ENCODE measurements at regions of chr1 and their contacts with region 1.

Region 1: GRCh38 chr1:222754366-222755139 is 17.6 kb downstream of the FAM177B start:
- DNase-seq: peak; percentile 98
- H3K4me3 Mint-ChIP-seq: peak overlapping the region; percentile 46
- H3K27ac Mint-ChIP-seq: peak overlapping the region; percentile 86
- H3K4me1 Mint-ChIP-seq: peaks cover 28% of the 10 kb centered on the region
- H3K27me3 Mint-ChIP-seq: no peaks in the 10 kb centered on the region
- CTCF ChIP-seq: no peak

Region 2: DNA sequence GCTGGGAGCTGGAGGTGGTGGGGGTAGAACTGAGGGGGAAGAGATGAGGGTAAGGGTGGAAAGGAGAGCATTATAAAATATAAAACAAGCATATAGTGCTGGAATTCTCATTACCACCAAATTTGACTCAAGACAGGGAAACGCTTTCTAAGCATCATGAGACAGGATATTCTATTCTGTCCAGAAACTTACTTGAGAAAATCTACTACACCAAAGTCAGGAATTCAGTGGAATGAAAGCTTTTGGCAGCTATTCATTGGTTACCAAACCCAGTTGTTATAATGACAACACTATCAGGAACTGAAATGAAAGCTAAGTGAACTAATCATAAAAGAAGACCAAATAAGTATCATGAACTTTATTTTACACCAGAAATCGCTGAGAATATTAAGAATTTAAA is 56.7 kb before region 1 on chr1:
- CTCF ChIA-PET with region 1: no interaction called
- POLR2A ChIA-PET with region 1: no interaction called
- intact Hi-C with region 1: no loop called
- DNase-seq: no peak
- H3K4me3 Mint-ChIP-seq: no peak overlapping the region
- H3K27ac Mint-ChIP-seq: peak overlapping the region; percentile 66
- H3K4me1 Mint-ChIP-seq: peaks cover 9% of the 10 kb centered on the region
- H3K27me3 Mint-ChIP-seq: no peaks in the 10 kb centered on the region
- CTCF ChIP-seq: no peak

Region 3: DNA sequence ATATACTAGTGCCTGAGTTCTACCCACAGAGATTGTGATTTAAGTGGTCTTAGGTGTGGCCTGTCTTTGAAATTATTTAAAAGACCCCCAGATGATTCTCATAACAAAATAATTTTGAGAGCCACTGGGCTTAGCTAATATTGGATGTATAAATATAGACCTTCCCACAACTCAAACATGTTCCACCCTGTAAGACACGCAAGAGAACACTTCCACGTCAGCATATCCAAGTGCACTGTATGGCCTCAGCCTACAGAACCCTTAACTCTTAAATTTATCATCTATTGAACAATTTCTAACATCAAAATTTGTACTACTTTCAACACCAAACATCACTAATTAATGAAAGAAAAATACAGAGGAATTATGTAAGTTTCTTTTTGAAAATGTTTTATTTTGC is 15.1 kb before region 1 on chr1:
- CTCF ChIA-PET with region 1: interaction called, 41 read pairs
- POLR2A ChIA-PET with region 1: interaction called, 17 read pairs
- intact Hi-C with region 1: no loop called
- DNase-seq: no peak
- H3K4me3 Mint-ChIP-seq: no peak overlapping the region
- H3K27ac Mint-ChIP-seq: no peak overlapping the region
- H3K4me1 Mint-ChIP-seq: no peaks in the 10 kb centered on the region
- H3K27me3 Mint-ChIP-seq: no peaks in the 10 kb centered on the region
- CTCF ChIP-seq: no peak

Region 4: DNA sequence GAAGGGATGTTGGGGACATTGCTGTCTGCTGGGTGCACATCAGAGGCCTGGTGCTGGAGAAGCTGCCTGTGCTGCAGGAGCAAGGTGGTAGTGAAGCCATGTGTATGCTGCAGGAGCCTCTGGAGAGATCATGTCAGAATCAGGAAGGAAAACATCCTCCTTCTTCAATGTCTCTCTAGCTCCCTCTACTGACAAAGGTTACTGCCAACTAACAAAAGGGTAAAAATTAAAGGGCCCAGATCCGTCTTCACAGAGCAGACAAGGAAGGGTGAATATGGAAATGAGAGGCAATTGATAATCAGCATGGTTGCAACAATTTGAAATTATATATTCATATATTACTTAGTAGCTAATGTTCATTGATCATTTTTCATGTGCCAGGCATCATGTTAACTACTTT is 14.6 kb after region 1 on chr1:
- CTCF ChIA-PET with region 1: interaction called, 13 read pairs
- POLR2A ChIA-PET with region 1: interaction called, 10 read pairs
- intact Hi-C with region 1: no loop called
- DNase-seq: no peak
- H3K4me3 Mint-ChIP-seq: no peak overlapping the region
- H3K27ac Mint-ChIP-seq: no peak overlapping the region
- H3K4me1 Mint-ChIP-seq: peaks cover 16% of the 10 kb centered on the region
- H3K27me3 Mint-ChIP-seq: no peaks in the 10 kb centered on the region
- CTCF ChIP-seq: peak; percentile 31

Region 5: GRCh38 chr1:222777977-222778376 is 23.4 kb after region 1 on chr1:
- CTCF ChIA-PET with region 1: interaction called, 15 read pairs
- POLR2A ChIA-PET with region 1: interaction called, 56 read pairs
- intact Hi-C with region 1: loop called (anchors 1 kb)
- DNase-seq: peak; percentile 100
- H3K4me3 Mint-ChIP-seq: peak overlapping the region; percentile 28
- H3K27ac Mint-ChIP-seq: peak overlapping the region; percentile 77
- H3K4me1 Mint-ChIP-seq: peaks cover 21% of the 10 kb centered on the region
- H3K27me3 Mint-ChIP-seq: peaks cover 14% of the 10 kb centered on the region
- CTCF ChIP-seq: no peak